T-cell (primary cell): ENCODE measurements at regions of chr16 and their contacts with region 1.

Region 1: GRCh38 chr16:69089091-69089910 is 16.2 kb upstream of the HAS3 start:
- DNase-seq: no peak
- ATAC-seq: peak in 3 of 4 experiments; percentile 67 to 83 (median 80)
- H3K4me3 ChIP-seq: no peak overlapping the region
- H3K4me3 Mint-ChIP-seq: no peak overlapping the region
- H3K27ac ChIP-seq: no peak overlapping the region
- H3K27ac Mint-ChIP-seq: peak overlapping the region; percentile 46 to 58
- H3K4me1 ChIP-seq: peaks cover 0 to 8% of the 10 kb centered on the region in 2 experiments
- H3K4me1 Mint-ChIP-seq: peaks cover 5 to 16% (median 9%) of the 10 kb centered on the region in 3 donors
- H3K27me3 ChIP-seq: no peaks in the 10 kb centered on the region
- H3K27me3 Mint-ChIP-seq: no peaks in the 10 kb centered on the region

Region 2: DNA sequence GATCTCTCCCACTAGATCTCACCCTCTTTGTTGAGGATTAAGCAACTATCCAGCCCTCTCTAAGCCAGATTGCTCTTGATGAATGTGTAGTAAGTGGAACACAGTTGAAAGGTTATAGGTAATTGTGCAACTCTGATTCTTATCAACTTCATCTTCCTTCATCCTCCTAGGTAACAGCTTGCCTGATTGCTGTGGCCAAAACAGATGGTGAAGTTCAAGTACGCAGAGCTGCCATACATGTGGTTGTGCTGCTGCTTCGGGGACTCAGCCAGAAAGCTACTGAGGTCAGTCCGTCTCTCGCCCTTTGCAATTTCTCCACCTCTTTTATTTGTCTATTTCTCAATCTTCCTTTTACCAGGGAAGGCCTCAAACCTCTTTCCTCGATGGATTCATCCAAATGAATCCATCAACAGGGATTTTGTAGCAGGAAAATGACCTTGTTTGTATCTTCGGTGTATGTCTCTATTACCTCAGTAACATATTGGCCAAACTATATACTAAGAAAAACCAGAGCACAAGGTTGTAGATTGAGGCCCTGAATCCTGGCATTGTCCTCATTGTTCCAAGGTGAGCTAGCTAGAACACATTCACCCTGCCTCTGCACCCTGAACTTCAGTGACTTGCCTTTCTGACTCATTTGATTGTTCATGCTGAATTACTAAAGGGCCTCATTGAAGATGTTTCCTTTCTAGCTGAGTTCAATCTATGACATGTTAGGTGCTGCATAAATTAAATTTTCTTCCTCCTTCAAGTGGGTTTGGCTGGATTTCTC is 49.0 kb before region 1 on chr16:
- CTCF ChIA-PET with region 1: no interaction called
- POLR2A ChIA-PET with region 1: interaction called in 1 of 2 experiments, 10 read pairs
- DNase-seq: no peak
- ATAC-seq: no peak
- H3K4me3 ChIP-seq: no peak overlapping the region
- H3K4me3 Mint-ChIP-seq: no peak overlapping the region
- H3K27ac ChIP-seq: no peak overlapping the region
- H3K27ac Mint-ChIP-seq: no peak overlapping the region
- H3K4me1 ChIP-seq: no peaks in the 10 kb centered on the region
- H3K4me1 Mint-ChIP-seq: no peaks in the 10 kb centered on the region
- H3K27me3 ChIP-seq: no peaks in the 10 kb centered on the region
- H3K27me3 Mint-ChIP-seq: no peaks in the 10 kb centered on the region

Region 3: GRCh38 chr16:69132424-69133252 is 43.3 kb after region 1 on chr16 and contains the starts of genes CHTF8 and UTP4:
- CTCF ChIA-PET with region 1: no interaction called
- POLR2A ChIA-PET with region 1: no interaction called
- DNase-seq: peak; percentile 68 to 92 (median 84)
- ATAC-seq: peak; percentile 91 to 94 (median 93)
- H3K4me3 ChIP-seq: peak within 1 kb of the TSS; percentile 80 to 92
- H3K4me3 Mint-ChIP-seq: peak within 1 kb of the TSS; percentile 92 to 95 (median 94)
- H3K27ac ChIP-seq: peak within 1 kb of the TSS; percentile 59
- H3K27ac Mint-ChIP-seq: peak within 1 kb of the TSS; percentile 88 to 93
- H3K4me1 ChIP-seq: peaks cover 16 to 20% of the 10 kb centered on the region in 2 experiments
- H3K4me1 Mint-ChIP-seq: peaks cover 57 to 62% (median 61%) of the 10 kb centered on the region in 3 donors
- H3K27me3 ChIP-seq: no peaks in the 10 kb centered on the region
- H3K27me3 Mint-ChIP-seq: no peaks in the 10 kb centered on the region
- total RNA-seq, gene CHTF8: 64.8 to 138 (median 124) TPM
- total RNA-seq, gene UTP4: 30.3 to 42.5 (median 37.8) TPM